Activated naive CD4-positive, alpha-beta T cell treated with anti-CD3 and anti-CD28 coated beads for 36 hours (primary cell): ENCODE measurements at regions of chr6 and their contacts with region 1.

Region 1: GRCh38 chr6:112237595-112237994 is 16.8 kb downstream of the LAMA4 start:
- DNase-seq: no peak
- H3K4me3 Mint-ChIP-seq: no peak overlapping the region
- H3K27ac Mint-ChIP-seq: no peak overlapping the region
- H3K4me1 Mint-ChIP-seq: peaks cover 19% of the 10 kb centered on the region
- H3K27me3 Mint-ChIP-seq: peaks cover 7% of the 10 kb centered on the region

Region 2: GRCh38 chr6:112286010-112286409 is 48.4 kb after region 1 on chr6:
- CTCF ChIA-PET with region 1: no interaction called
- intact Hi-C with region 1: loop called (anchors 1 kb)
- DNase-seq: peak; percentile 78
- H3K4me3 Mint-ChIP-seq: no peak overlapping the region
- H3K27ac Mint-ChIP-seq: no peak overlapping the region
- H3K4me1 Mint-ChIP-seq: peaks cover 8% of the 10 kb centered on the region
- H3K27me3 Mint-ChIP-seq: no peaks in the 10 kb centered on the region

Region 3: GRCh38 chr6:112535816-112536215 is 298.2 kb after region 1 on chr6:
- CTCF ChIA-PET with region 1: no interaction called
- intact Hi-C with region 1: no loop called
- DNase-seq: no peak
- H3K4me3 Mint-ChIP-seq: no peak overlapping the region
- H3K27ac Mint-ChIP-seq: no peak overlapping the region
- H3K4me1 Mint-ChIP-seq: no peaks in the 10 kb centered on the region
- H3K27me3 Mint-ChIP-seq: no peaks in the 10 kb centered on the region